ENCODE measurements at regions of chr19 and their contacts with region 1.

Region 1: DNA sequence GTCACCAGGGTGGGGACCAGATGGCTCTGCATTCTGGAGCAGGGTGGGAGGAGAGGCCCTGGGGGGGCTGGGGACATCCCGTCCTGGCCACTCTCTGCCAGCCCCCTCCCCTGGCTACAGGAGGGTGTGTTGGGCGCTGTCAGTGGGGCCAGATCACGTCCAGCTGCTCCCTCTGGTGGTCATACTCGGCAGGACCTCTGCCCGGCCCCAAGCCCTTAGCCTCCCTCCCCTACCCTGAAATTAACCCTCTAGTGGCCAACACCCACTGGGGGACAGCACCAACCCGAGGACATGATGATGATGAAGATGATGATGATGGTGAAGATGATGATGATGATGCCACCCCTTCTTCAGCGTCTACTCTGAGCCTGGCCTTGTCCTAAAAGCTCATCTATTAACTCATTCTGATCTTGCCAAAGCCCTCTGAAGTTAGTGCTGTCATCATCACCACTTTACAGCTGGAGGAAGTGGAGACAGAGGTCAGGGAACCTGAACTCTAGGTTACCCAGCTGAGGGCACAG is 590 bp upstream of the LGI4 start:
- DNase-seq: peak; percentile 81
- ATAC-seq: peak; percentile 96
- H3K4me3 Mint-ChIP-seq: no peak overlapping the region
- H3K27ac Mint-ChIP-seq: no peak overlapping the region
- H3K4me1 Mint-ChIP-seq: peaks cover 4% of the 10 kb centered on the region
- H3K27me3 Mint-ChIP-seq: no peaks in the 10 kb centered on the region
- CTCF ChIP-seq: peak; percentile 75

Region 2: DNA sequence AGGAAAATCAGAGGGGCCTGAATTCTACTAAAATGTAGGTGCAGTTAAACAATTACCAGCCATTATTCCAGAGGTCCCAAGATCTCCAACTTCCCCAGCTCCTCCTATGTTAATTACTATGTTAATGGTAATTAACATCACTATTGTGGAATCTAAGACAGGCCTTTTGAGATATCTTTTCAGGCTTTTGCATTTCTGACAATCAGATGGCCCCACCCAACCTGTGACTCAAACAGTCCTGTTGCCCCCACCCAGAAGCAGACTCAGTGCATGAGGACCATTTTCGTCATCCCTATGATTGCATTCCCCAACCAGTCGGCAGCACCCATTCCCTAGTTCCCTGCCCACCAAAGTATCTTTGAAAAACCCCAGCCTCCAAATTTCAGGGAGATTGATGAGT is 217.3 kb before region 1 on chr19:
- CTCF ChIA-PET with region 1: no interaction called
- POLR2A ChIA-PET with region 1: no interaction called
- intact Hi-C with region 1: no loop called
- DNase-seq: no peak
- ATAC-seq: no peak
- H3K4me3 Mint-ChIP-seq: no peak overlapping the region
- H3K27ac Mint-ChIP-seq: no peak overlapping the region
- H3K4me1 Mint-ChIP-seq: no peaks in the 10 kb centered on the region
- H3K27me3 Mint-ChIP-seq: no peaks in the 10 kb centered on the region
- CTCF ChIP-seq: no peak

Region 3: DNA sequence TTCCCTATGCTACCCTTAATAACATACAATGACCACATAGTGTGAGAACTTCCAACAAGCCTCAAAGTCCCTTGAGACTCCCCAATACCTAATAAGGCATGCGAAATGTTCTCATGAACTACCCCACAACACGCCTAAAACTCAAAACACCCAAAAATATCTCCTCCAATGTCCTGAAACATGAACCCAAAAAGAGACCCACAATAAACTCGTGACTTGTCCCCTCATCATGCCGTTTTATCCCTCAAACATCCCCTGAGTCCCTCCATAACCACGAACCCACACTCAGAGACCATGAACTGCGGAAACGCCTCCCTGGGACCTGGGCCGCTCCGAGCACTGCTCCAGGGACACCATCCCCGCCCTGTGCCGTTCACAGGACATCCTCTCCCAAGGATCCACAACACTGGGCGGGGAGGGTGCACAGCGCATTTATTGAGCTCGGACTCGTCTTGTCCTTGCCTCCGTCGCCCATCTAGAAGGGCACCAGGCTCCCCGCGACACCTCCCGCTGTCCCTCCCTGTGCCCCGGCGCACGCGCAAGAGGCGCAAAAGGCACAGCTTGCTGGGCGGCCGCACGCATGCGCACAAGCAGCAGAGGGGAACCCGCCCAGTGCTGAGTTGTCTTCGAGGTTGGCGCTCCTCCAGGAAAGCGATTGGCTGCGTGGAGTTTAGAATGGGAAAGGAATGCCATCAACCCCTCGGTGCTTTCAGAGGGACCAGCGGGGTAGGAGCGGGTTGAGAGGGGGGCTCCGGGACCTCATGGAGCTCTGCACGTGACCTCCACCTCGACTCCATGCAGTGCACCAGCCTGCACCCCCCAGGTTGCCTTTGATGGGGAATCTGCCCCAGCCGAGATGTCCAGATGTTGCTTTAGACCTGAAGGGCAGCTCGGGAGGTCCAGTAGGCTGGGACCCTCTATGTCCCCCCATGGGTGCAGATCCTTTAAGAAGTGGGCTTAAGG is 11.1 kb before region 1 on chr19:
- CTCF ChIA-PET with region 1: interaction called, 11 read pairs
- POLR2A ChIA-PET with region 1: no interaction called
- intact Hi-C with region 1: no loop called
- DNase-seq: peak; percentile 85
- ATAC-seq: peak; percentile 99
- H3K4me3 Mint-ChIP-seq: peak overlapping the region; percentile 73
- H3K27ac Mint-ChIP-seq: peak overlapping the region; percentile 43
- H3K4me1 Mint-ChIP-seq: peaks cover 10% of the 10 kb centered on the region
- H3K27me3 Mint-ChIP-seq: no peaks in the 10 kb centered on the region
- CTCF ChIP-seq: no peak

Region 4: DNA sequence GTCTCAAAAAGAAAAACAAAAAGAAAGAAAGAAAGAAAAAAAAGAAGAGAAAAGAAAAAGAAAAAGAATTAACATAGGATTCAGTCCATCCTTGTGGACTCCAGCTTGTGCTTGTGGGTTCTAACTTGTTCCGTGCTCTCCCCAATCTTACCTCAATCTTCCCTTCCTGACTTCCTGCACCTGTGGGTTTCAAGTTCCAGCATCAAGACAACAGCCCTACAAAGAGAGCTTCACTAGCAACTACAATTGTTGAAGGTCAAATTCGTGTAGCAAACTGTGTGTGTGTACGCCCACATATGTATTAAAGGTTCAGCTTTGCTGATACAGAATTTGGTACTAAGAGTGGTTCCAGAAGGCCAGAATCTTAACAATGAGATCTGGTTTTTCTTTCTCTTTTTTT is 44.4 kb after region 1 on chr19:
- CTCF ChIA-PET with region 1: no interaction called
- POLR2A ChIA-PET with region 1: no interaction called
- intact Hi-C with region 1: no loop called
- DNase-seq: no peak
- ATAC-seq: peak; percentile 65
- H3K4me3 Mint-ChIP-seq: no peak overlapping the region
- H3K27ac Mint-ChIP-seq: peak overlapping the region; percentile 22
- H3K4me1 Mint-ChIP-seq: peaks cover 24% of the 10 kb centered on the region
- H3K27me3 Mint-ChIP-seq: no peaks in the 10 kb centered on the region
- CTCF ChIP-seq: no peak